IMR-90 (cell line): ENCODE measurements at regions of chr12 and their contacts with region 1.

Region 1: GRCh38 chr12:115990241-115990640 is 287.3 kb downstream of the MED13L start:
- DNase-seq: no peak
- ATAC-seq: no peak
- H3K4me3 ChIP-seq: no peak overlapping the region
- H3K27ac ChIP-seq: no peak overlapping the region
- H3K4me1 ChIP-seq: peaks cover 8% of the 10 kb centered on the region
- H3K27me3 ChIP-seq: no peaks in the 10 kb centered on the region
- CTCF ChIP-seq: no peak
- POLR2A ChIP-seq: no peak
- RAD21 ChIP-seq: no peak

Region 2: DNA sequence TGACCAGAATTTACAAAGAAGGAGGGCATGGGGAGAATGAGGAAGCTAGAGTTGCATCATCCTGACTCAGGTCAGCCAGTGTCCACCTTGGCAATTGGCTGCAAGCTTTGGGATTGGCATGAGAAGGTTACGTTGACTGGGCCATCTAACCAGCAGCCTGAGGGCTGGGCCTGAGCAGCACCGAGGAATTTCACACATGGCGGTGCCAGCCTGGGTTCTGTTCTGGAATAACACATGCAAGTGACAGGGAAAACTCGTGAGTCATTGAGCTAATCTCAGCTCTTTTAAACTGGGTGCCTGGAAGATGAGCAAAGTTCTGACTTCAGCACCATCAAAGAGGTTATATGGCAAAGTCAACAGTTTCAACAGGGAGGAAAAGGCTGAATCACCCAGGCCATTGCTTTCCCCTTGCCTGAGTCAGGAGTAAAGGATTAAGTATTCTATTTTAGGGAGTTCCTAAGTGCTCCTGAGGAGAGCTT is 763.1 kb before region 1 on chr12:
- CTCF ChIA-PET with region 1: no interaction called
- POLR2A ChIA-PET with region 1: no interaction called
- dilution Hi-C with region 1: no loop called
- in situ Hi-C with region 1: no loop called
- intact Hi-C with region 1: no loop called
- DNase-seq: peak; percentile 92
- ATAC-seq: peak; percentile 75
- H3K4me3 ChIP-seq: no peak overlapping the region
- H3K27ac ChIP-seq: no peak overlapping the region
- H3K4me1 ChIP-seq: peaks cover 7% of the 10 kb centered on the region; the same call in 1 of the 2 replicates
- H3K27me3 ChIP-seq: no peaks in the 10 kb centered on the region
- CTCF ChIP-seq: no peak
- POLR2A ChIP-seq: no peak
- RAD21 ChIP-seq: no peak

Region 3: GRCh38 chr12:116697305-116697704 is 707.1 kb after region 1 on chr12:
- CTCF ChIA-PET with region 1: interaction called, 3 read pairs
- POLR2A ChIA-PET with region 1: no interaction called
- dilution Hi-C with region 1: no loop called
- in situ Hi-C with region 1: loop called (anchors 10 kb)
- intact Hi-C with region 1: loop called (anchors 2 kb)
- DNase-seq: no peak
- ATAC-seq: peak; percentile 63; the same call in 1 of the 2 replicates
- H3K4me3 ChIP-seq: no peak overlapping the region
- H3K27ac ChIP-seq: no peak overlapping the region
- H3K4me1 ChIP-seq: no peaks in the 10 kb centered on the region; the same call in 1 of the 2 replicates
- H3K27me3 ChIP-seq: peaks cover 45% of the 10 kb centered on the region
- CTCF ChIP-seq: peak; percentile 29; the same call in 1 of the 2 replicates
- POLR2A ChIP-seq: no peak
- RAD21 ChIP-seq: peak; percentile 42